ENCODE measurements at regions of chr16 and their contacts with region 1.

Region 1: DNA sequence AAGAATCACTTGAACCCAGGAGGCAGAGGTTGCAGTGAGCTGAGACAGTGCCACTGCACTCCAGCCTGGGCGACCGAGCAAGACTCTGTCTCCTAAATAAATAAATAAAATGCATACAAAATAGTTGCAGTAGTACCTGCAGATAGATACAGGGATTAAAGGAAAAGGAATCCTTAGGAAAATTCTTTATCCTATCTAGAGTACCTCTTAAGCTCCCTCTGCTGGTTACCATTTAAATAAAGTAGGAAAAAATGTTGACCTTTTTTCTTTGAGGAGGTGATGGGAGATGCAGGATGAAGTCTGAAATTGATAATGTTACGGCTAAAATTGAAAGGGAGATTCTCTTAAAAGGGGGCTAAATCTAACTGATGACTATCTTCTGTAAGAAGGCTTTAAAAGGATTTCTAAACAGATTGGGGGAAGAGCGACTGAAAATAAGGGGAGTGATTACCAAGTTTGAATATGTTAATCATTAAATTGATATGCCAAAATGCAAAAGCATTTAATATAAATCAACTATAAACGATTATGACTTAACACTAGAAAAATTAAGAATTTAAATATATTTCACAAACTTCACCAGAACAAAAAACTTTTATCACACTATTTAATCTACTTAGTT is 29.4 kb downstream of the C16orf87 start:
- DNase-seq: no peak
- H3K4me3 ChIP-seq: no peak overlapping the region
- H3K27ac ChIP-seq: no peak overlapping the region
- H3K4me1 ChIP-seq: no peaks in the 10 kb centered on the region
- H3K27me3 ChIP-seq: no peaks in the 10 kb centered on the region
- CTCF ChIP-seq: peak; percentile 20 to 51

Region 2: GRCh38 chr16:46555951-46556350 is 245.6 kb before region 1 on chr16:
- CTCF ChIA-PET with region 1: no interaction called
- dilution Hi-C with region 1: no loop called
- in situ Hi-C with region 1: no loop called
- intact Hi-C with region 1: loop called (anchors 10 kb)
- DNase-seq: peak; percentile 42
- H3K4me3 ChIP-seq: no peak overlapping the region
- H3K27ac ChIP-seq: no peak overlapping the region
- H3K4me1 ChIP-seq: no peaks in the 10 kb centered on the region
- H3K27me3 ChIP-seq: no peaks in the 10 kb centered on the region
- CTCF ChIP-seq: no peak

Region 3: GRCh38 chr16:46789499-46790414 is 11.8 kb before region 1 on chr16:
- CTCF ChIA-PET with region 1: interaction called, 14 read pairs
- dilution Hi-C with region 1: no loop called
- in situ Hi-C with region 1: no loop called
- intact Hi-C with region 1: no loop called
- DNase-seq: peak; percentile 42
- H3K4me3 ChIP-seq: peak overlapping the region; percentile 41 to 82 (median 64)
- H3K27ac ChIP-seq: no peak overlapping the region
- H3K4me1 ChIP-seq: peaks cover 9% of the 10 kb centered on the region
- H3K27me3 ChIP-seq: no peaks in the 10 kb centered on the region
- CTCF ChIP-seq: no peak